ENCODE measurements at regions of chr2 and their contacts with region 1.

Region 1: GRCh38 chr2:230614913-230615332 is 97.7 kb upstream of the CAB39 start:
- DNase-seq: no peak
- ATAC-seq: no peak
- H3K4me3 ChIP-seq: no peak overlapping the region
- H3K27ac ChIP-seq: no peak overlapping the region
- H3K4me1 ChIP-seq: peaks cover 18% of the 10 kb centered on the region
- H3K27me3 ChIP-seq: no peaks in the 10 kb centered on the region
- CTCF ChIP-seq: no peak

Region 2: DNA sequence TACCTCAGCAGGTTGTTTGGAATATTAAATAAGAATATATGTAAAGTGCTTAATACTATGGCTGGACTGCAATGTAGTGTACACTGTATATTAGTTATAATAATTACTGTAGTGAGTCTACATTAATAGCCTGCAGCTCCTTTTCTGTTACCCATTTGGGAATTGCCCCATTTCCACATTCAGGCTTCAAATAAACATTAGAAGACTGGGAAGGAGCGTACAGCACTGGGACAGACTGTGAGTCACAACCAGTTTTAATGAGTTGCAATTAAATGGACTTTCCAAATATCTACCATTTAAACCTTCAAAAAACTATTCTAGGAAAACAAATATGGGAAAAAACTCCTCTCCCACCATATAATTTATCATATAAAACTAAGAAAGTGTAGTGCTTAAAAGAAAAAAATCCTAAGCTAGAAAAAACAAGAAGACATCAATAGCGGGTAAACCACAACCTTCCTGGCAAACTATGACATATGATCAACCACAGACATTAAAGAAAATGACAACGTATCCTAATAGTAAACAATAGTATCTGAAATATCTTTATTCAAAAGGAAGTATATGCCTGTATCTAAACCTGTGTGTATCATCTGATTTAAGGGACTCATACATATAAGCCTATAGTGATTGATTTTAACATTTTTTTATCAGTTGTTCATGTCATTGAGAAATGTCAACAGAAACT is 779.2 kb before region 1 on chr2:
- CTCF ChIA-PET with region 1: no interaction called
- POLR2A ChIA-PET with region 1: no interaction called
- intact Hi-C with region 1: no loop called
- DNase-seq: peak; percentile 32
- ATAC-seq: peak; percentile 85
- H3K4me3 ChIP-seq: no peak overlapping the region
- H3K27ac ChIP-seq: peak overlapping the region; percentile 17
- H3K4me1 ChIP-seq: peaks cover 18% of the 10 kb centered on the region
- H3K27me3 ChIP-seq: no peaks in the 10 kb centered on the region
- CTCF ChIP-seq: no peak

Region 3: GRCh38 chr2:230068016-230068650 is 546.8 kb before region 1 on chr2:
- CTCF ChIA-PET with region 1: no interaction called
- POLR2A ChIA-PET with region 1: no interaction called
- intact Hi-C with region 1: loop called (anchors 5 kb)
- DNase-seq: peak; percentile 52
- ATAC-seq: peak; percentile 47
- H3K4me3 ChIP-seq: peak overlapping the region; percentile 73
- H3K27ac ChIP-seq: peak overlapping the region; percentile 59
- H3K4me1 ChIP-seq: no peaks in the 10 kb centered on the region
- H3K27me3 ChIP-seq: no peaks in the 10 kb centered on the region
- CTCF ChIP-seq: 0 out of 2 replicates have a peak, but pooled peaks have one; percentile 19

Region 4: GRCh38 chr2:230430957-230431910 is 183.7 kb before region 1 on chr2:
- CTCF ChIA-PET with region 1: no interaction called
- POLR2A ChIA-PET with region 1: no interaction called
- intact Hi-C with region 1: loop called (anchors 5 kb)
- DNase-seq: no peak
- ATAC-seq: no peak
- H3K4me3 ChIP-seq: no peak overlapping the region
- H3K27ac ChIP-seq: no peak overlapping the region
- H3K4me1 ChIP-seq: peaks cover 11% of the 10 kb centered on the region; the same call in 1 of the 2 replicates
- H3K27me3 ChIP-seq: no peaks in the 10 kb centered on the region
- CTCF ChIP-seq: no peak

Region 5: GRCh38 chr2:230582851-230583283 is 32.1 kb before region 1 on chr2:
- CTCF ChIA-PET with region 1: no interaction called
- POLR2A ChIA-PET with region 1: no interaction called
- intact Hi-C with region 1: no loop called
- DNase-seq: peak; percentile 73
- ATAC-seq: peak; percentile 66
- H3K4me3 ChIP-seq: no peak overlapping the region
- H3K27ac ChIP-seq: peak overlapping the region; percentile 53
- H3K4me1 ChIP-seq: peaks cover 16% of the 10 kb centered on the region
- H3K27me3 ChIP-seq: no peaks in the 10 kb centered on the region
- CTCF ChIP-seq: no peak

Region 6: GRCh38 chr2:230640540-230641011 is 25.7 kb after region 1 on chr2:
- CTCF ChIA-PET with region 1: interaction called, 4 read pairs
- POLR2A ChIA-PET with region 1: no interaction called
- intact Hi-C with region 1: loop called (anchors 1 kb)
- DNase-seq: peak; percentile 86
- ATAC-seq: peak; percentile 97
- H3K4me3 ChIP-seq: no peak overlapping the region
- H3K27ac ChIP-seq: peak overlapping the region; percentile 79
- H3K4me1 ChIP-seq: peaks cover 13% of the 10 kb centered on the region
- H3K27me3 ChIP-seq: no peaks in the 10 kb centered on the region
- CTCF ChIP-seq: no peak

Region 7: GRCh38 chr2:230793572-230794359 is 178.8 kb after region 1 on chr2:
- CTCF ChIA-PET with region 1: interaction called, 4 read pairs
- POLR2A ChIA-PET with region 1: interaction called, 3 read pairs
- intact Hi-C with region 1: loop called (anchors 1 kb)
- DNase-seq: peak; percentile 96
- ATAC-seq: peak; percentile 90
- H3K4me3 ChIP-seq: peak overlapping the region; percentile 52
- H3K27ac ChIP-seq: peak overlapping the region; percentile 98
- H3K4me1 ChIP-seq: peaks cover 63% of the 10 kb centered on the region
- H3K27me3 ChIP-seq: no peaks in the 10 kb centered on the region
- CTCF ChIP-seq: no peak

Region 8: GRCh38 chr2:230814616-230815015 is 199.7 kb after region 1 on chr2:
- CTCF ChIA-PET with region 1: interaction called, 6 read pairs
- POLR2A ChIA-PET with region 1: no interaction called
- intact Hi-C with region 1: loop called (anchors 5 kb)
- DNase-seq: peak; percentile 52
- ATAC-seq: peak; percentile 65
- H3K4me3 ChIP-seq: no peak overlapping the region
- H3K27ac ChIP-seq: no peak overlapping the region
- H3K4me1 ChIP-seq: no peaks in the 10 kb centered on the region
- H3K27me3 ChIP-seq: no peaks in the 10 kb centered on the region
- CTCF ChIP-seq: peak; percentile 71